ENCODE measurements at regions of chr16 and their contacts with region 1.

Region 1: GRCh38 chr16:8943966-8944759 is 19.5 kb downstream of the USP7 start:
- DNase-seq: no peak
- ATAC-seq: peak; percentile 39
- H3K4me3 ChIP-seq: no peak overlapping the region
- H3K4me3 Mint-ChIP-seq: peak overlapping the region; percentile 64
- H3K27ac ChIP-seq: no peak overlapping the region
- H3K27ac Mint-ChIP-seq: peak overlapping the region; percentile 73
- H3K4me1 ChIP-seq: peaks cover 95% of the 10 kb centered on the region
- H3K4me1 Mint-ChIP-seq: peaks cover 96% of the 10 kb centered on the region
- H3K27me3 ChIP-seq: no peaks in the 10 kb centered on the region
- H3K27me3 Mint-ChIP-seq: no peaks in the 10 kb centered on the region
- CTCF ChIP-seq: no peak

Region 2: GRCh38 chr16:8958344-8959167 is 14.4 kb after region 1 on chr16:
- CTCF ChIA-PET with region 1: interaction called, 3 read pairs
- POLR2A ChIA-PET with region 1: interaction called, 5 read pairs
- intact Hi-C with region 1: loop called (anchors 1 to 2 kb)
- DNase-seq: peak in 5 of 9 experiments; percentile 17 to 62 (median 38)
- ATAC-seq: no peak
- H3K4me3 ChIP-seq: peak overlapping the region; percentile 24 to 25
- H3K4me3 Mint-ChIP-seq: peak overlapping the region; percentile 75
- H3K27ac ChIP-seq: peak overlapping the region; percentile 9 to 76
- H3K27ac Mint-ChIP-seq: peak overlapping the region; percentile 88
- H3K4me1 ChIP-seq: peaks cover 70% of the 10 kb centered on the region
- H3K4me1 Mint-ChIP-seq: peaks cover 77% of the 10 kb centered on the region
- H3K27me3 ChIP-seq: no peaks in the 10 kb centered on the region
- H3K27me3 Mint-ChIP-seq: no peaks in the 10 kb centered on the region
- CTCF ChIP-seq: no peak

Region 3: DNA sequence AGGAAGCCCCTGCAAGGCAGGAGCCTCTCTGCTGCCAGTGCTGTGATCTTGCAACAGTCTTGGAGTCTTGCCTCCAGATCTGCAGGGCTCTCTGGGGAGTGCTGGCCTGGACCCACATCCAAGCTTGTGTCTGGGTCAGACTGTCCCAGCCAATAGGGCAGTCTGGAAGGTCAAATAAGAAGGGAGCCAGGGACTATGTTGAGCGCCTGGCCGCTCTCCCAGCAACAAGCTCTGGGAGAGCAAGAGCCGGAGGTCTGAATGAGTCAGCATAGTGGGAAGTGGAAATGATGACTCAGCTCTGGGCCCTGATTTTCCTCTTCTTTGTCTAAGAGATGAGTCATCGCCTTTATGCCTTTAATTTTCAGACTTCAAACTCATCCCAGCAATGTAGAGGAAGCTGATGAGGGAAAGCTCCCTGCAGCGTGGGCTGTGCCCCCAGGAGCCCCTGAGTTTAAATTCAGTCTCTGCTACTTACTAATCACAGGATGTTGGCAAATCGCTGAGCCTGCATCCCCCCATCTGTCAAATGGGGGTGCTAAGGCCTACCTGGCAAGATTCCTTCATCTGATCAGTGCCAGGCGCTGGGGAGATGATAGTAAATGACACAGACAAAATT is 103.6 kb after region 1 on chr16:
- CTCF ChIA-PET with region 1: no interaction called
- POLR2A ChIA-PET with region 1: no interaction called
- intact Hi-C with region 1: no loop called
- DNase-seq: peak in 3 of 9 experiments; percentile 6 to 46 (median 21)
- ATAC-seq: no peak
- H3K4me3 ChIP-seq: no peak overlapping the region
- H3K4me3 Mint-ChIP-seq: no peak overlapping the region
- H3K27ac ChIP-seq: no peak overlapping the region
- H3K27ac Mint-ChIP-seq: no peak overlapping the region
- H3K4me1 ChIP-seq: no peaks in the 10 kb centered on the region
- H3K4me1 Mint-ChIP-seq: no peaks in the 10 kb centered on the region
- H3K27me3 ChIP-seq: no peaks in the 10 kb centered on the region
- H3K27me3 Mint-ChIP-seq: peaks cover 2% of the 10 kb centered on the region
- CTCF ChIP-seq: no peak